Esophagus squamous epithelium (tissue), 5 donors: ENCODE measurements at regions of chr17 and their contacts with region 1.

Region 1: GRCh38 chr17:75199886-75200618 is 5.4 kb upstream of the NUP85 start:
- DNase-seq: no peak
- H3K4me3 ChIP-seq: no peak overlapping the region
- H3K27ac ChIP-seq: no peak overlapping the region
- H3K4me1 ChIP-seq: peaks cover 3 to 8% (median 3%) of the 10 kb centered on the region in 3 donors
- H3K27me3 ChIP-seq: no peaks in the 10 kb centered on the region
- CTCF ChIP-seq: no peak
- POLR2A ChIP-seq: no peak

Region 2: GRCh38 chr17:75109407-75110233 is 90.4 kb before region 1 on chr17 and contains the start of gene ARMC7:
- intact Hi-C with region 1: loop called (anchors 5 kb)
- DNase-seq: peak; percentile 30
- H3K4me3 ChIP-seq: peak within 1 kb of the TSS; percentile 73 to 91 (median 89)
- H3K27ac ChIP-seq: peak within 1 kb of the TSS; percentile 73 to 92 (median 90)
- H3K4me1 ChIP-seq: peaks cover 18 to 46% (median 25%) of the 10 kb centered on the region in 3 donors
- H3K27me3 ChIP-seq: no peaks in the 10 kb centered on the region
- CTCF ChIP-seq: peak in 1 of 6 experiments; percentile 12
- POLR2A ChIP-seq: peak in 2 of 4 donors; percentile 75 to 79
- total RNA-seq, gene ARMC7: 4.0 to 9.1 (median 5.3) TPM

Region 3: GRCh38 chr17:75144816-75145512 is 55.1 kb before region 1 on chr17:
- intact Hi-C with region 1: no loop called
- DNase-seq: no peak
- H3K4me3 ChIP-seq: no peak overlapping the region
- H3K27ac ChIP-seq: no peak overlapping the region
- H3K4me1 ChIP-seq: peaks cover 0 to 23% (median 0%) of the 10 kb centered on the region in 3 donors
- H3K27me3 ChIP-seq: no peaks in the 10 kb centered on the region
- CTCF ChIP-seq: no peak
- POLR2A ChIP-seq: no peak

Region 4: GRCh38 chr17:75338335-75338734 is 138.3 kb after region 1 on chr17:
- intact Hi-C with region 1: no loop called
- DNase-seq: no peak
- H3K4me3 ChIP-seq: no peak overlapping the region
- H3K27ac ChIP-seq: peak overlapping the region in 2 of 4 donors; percentile 26 to 34
- H3K4me1 ChIP-seq: peaks cover 8 to 65% (median 17%) of the 10 kb centered on the region in 3 donors
- H3K27me3 ChIP-seq: no peaks in the 10 kb centered on the region
- CTCF ChIP-seq: no peak
- POLR2A ChIP-seq: no peak